Naive thymus-derived CD4-positive, alpha-beta T cell (primary cell): ENCODE measurements at regions of chr2 and their contacts with region 1.

Region 1: GRCh38 chr2:61144697-61145268 is 17.2 kb upstream of the C2orf74 start:
- DNase-seq: peak; percentile 74 to 90 (median 86)
- ATAC-seq: peak; percentile 92
- H3K4me3 ChIP-seq: peak overlapping the region; percentile 82
- H3K4me3 Mint-ChIP-seq: peak overlapping the region; percentile 88 to 98 (median 94)
- H3K27ac ChIP-seq: peak overlapping the region; percentile 73
- H3K27ac Mint-ChIP-seq: peak overlapping the region; percentile 90 to 98 (median 95)
- H3K4me1 ChIP-seq: peaks cover 4 to 5% of the 10 kb centered on the region in 2 donors
- H3K4me1 Mint-ChIP-seq: peaks cover 0 to 18% (median 7%) of the 10 kb centered on the region in 7 donors
- H3K27me3 ChIP-seq: no peaks in the 10 kb centered on the region
- H3K27me3 Mint-ChIP-seq: peaks cover 0 to 2% (median 0%) of the 10 kb centered on the region in 5 donors

Region 2: DNA sequence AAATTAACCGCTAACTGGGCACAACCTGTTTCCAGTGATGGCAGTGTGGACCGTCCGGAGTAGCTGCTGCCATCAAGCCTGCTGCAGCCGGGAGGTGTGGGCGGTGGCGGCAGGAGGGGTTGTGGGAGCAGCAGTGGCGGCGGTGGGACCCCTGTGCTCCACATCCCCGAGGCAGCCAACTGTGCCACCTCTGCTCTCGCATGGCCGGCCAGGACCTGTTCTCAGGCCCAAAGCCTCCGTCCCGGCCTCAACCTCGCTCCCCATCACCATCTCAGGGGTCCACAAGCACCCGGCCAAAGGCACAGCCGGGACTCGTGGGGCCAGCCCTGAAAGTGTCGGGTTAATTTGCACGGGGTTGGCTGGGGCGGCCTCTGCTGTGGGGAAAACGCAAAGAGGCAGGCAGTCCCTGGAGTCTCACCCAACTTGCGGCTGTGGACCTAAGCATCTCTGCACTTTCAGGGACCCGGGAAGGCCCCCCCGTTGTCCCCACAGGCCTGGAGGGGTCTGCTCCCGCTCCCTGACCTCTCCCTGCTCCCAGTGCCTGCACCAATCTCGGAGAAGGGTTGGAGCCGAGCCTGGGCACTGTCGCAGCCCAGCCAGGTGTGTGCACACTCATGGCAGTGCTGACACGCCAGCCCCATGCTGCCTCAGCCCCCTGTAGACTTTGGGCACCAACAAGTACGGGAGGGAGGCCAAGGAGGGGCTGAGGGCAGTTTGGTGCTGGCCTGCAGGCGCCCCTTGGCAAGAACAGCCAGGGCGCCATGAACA is 171.7 kb before region 1 on chr2:
- CTCF ChIA-PET with region 1: no interaction called
- POLR2A ChIA-PET with region 1: no interaction called
- intact Hi-C with region 1: no loop called
- DNase-seq: no peak
- ATAC-seq: no peak
- H3K4me3 ChIP-seq: no peak overlapping the region
- H3K4me3 Mint-ChIP-seq: no peak overlapping the region
- H3K27ac ChIP-seq: no peak overlapping the region
- H3K27ac Mint-ChIP-seq: no peak overlapping the region
- H3K4me1 ChIP-seq: peaks cover 0 to 7% of the 10 kb centered on the region in 2 donors
- H3K4me1 Mint-ChIP-seq: peaks cover 4 to 22% (median 12%) of the 10 kb centered on the region in 7 donors
- H3K27me3 ChIP-seq: no peaks in the 10 kb centered on the region
- H3K27me3 Mint-ChIP-seq: no peaks in the 10 kb centered on the region

Region 3: GRCh38 chr2:61016808-61017555 is 127.8 kb before region 1 on chr2:
- CTCF ChIA-PET with region 1: no interaction called
- POLR2A ChIA-PET with region 1: interaction called, 7 read pairs
- intact Hi-C with region 1: loop called (anchors 1 kb)
- DNase-seq: peak; percentile 41 to 75 (median 72)
- ATAC-seq: peak; percentile 79
- H3K4me3 ChIP-seq: peak overlapping the region; percentile 100
- H3K4me3 Mint-ChIP-seq: peak overlapping the region; percentile 93 to 100 (median 97)
- H3K27ac ChIP-seq: peak overlapping the region; percentile 75
- H3K27ac Mint-ChIP-seq: peak overlapping the region; percentile 90 to 99 (median 95)
- H3K4me1 ChIP-seq: peaks cover 14 to 20% of the 10 kb centered on the region in 2 donors
- H3K4me1 Mint-ChIP-seq: peaks cover 23 to 68% (median 48%) of the 10 kb centered on the region in 7 donors
- H3K27me3 ChIP-seq: no peaks in the 10 kb centered on the region
- H3K27me3 Mint-ChIP-seq: no peaks in the 10 kb centered on the region

Region 4: DNA sequence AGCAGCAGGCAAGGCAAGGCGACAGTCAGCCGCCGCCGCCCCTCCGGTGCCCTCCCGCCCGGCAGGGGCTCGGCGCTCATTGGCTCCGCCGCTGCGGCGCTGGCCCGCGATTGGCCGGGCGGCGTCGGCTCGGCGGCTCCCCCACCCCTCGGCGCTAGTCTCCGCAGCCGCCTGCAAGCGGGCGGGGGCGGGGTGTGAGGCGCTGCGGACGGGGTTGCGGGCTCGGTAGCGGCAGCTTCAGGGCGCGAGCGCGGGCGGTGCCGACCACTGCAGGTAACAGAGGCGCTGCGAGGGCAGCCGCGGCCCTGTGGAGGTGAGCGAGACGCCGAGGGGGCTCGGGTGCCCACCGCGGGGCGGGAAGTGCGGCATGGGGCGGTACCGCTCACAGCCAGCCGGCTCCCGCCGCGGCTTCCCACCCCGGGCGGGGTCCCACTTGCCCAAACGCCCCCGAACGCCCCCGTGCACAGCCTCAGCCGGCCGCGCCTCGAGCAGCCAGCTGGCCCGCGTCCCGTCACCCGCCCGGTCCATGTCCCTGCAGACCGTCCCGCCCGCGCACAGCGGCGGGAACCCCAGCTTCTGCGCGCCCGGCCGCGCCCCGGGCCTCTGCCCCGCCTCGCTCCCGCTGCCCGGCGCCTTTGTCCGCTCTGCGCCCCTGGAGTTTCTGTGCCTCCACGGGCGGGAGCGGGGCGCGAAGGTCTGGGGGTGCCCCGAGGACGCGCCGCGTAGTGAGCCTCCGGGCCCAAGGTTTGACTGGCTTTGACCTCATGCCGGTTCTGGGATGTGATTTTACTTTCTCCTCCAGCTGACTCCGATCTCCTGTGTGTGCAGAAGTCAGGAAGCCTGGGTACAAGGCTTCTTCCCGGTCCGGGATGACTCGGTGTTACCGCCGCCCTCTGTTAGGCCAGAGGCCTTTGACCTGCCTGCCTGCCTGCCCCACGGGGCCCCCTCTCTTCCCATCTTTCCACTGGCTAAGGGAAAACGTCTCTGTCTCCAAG is 78.8 kb before region 1 on chr2 and contains the start of gene SANBR:
- CTCF ChIA-PET with region 1: no interaction called
- POLR2A ChIA-PET with region 1: interaction called, 4 read pairs
- intact Hi-C with region 1: loop called (anchors 1 to 2 kb)
- DNase-seq: peak; percentile 78 to 90 (median 83)
- ATAC-seq: peak; percentile 99
- H3K4me3 ChIP-seq: peak within 1 kb of the TSS; percentile 59
- H3K4me3 Mint-ChIP-seq: peak within 1 kb of the TSS; percentile 79 to 98 (median 95)
- H3K27ac ChIP-seq: peak within 1 kb of the TSS; percentile 49
- H3K27ac Mint-ChIP-seq: peak within 1 kb of the TSS; percentile 12 to 94 (median 79)
- H3K4me1 ChIP-seq: peaks cover 0 to 6% of the 10 kb centered on the region in 2 donors
- H3K4me1 Mint-ChIP-seq: peaks cover 0 to 17% (median 5%) of the 10 kb centered on the region in 7 donors
- H3K27me3 ChIP-seq: no peaks in the 10 kb centered on the region
- H3K27me3 Mint-ChIP-seq: peaks cover 0 to 2% (median 0%) of the 10 kb centered on the region in 5 donors
- total RNA-seq, gene SANBR: 2.0 to 5.9 (median 3.6) TPM

Region 5: GRCh38 chr2:61125123-61125710 is 19.6 kb before region 1 on chr2:
- CTCF ChIA-PET with region 1: no interaction called
- POLR2A ChIA-PET with region 1: no interaction called
- intact Hi-C with region 1: no loop called
- DNase-seq: no peak
- ATAC-seq: no peak
- H3K4me3 ChIP-seq: no peak overlapping the region
- H3K4me3 Mint-ChIP-seq: no peak overlapping the region
- H3K27ac ChIP-seq: no peak overlapping the region
- H3K27ac Mint-ChIP-seq: no peak overlapping the region
- H3K4me1 ChIP-seq: no peaks in the 10 kb centered on the region
- H3K4me1 Mint-ChIP-seq: no peaks in the 10 kb centered on the region
- H3K27me3 ChIP-seq: no peaks in the 10 kb centered on the region
- H3K27me3 Mint-ChIP-seq: no peaks in the 10 kb centered on the region

Region 6: GRCh38 chr2:61854474-61855182 is 709.8 kb after region 1 on chr2:
- CTCF ChIA-PET with region 1: no interaction called
- POLR2A ChIA-PET with region 1: no interaction called
- intact Hi-C with region 1: loop called in 1 of 2 experiments (anchors 1 kb)
- DNase-seq: peak; percentile 61 to 96 (median 94)
- ATAC-seq: peak; percentile 95
- H3K4me3 ChIP-seq: peak overlapping the region; percentile 100
- H3K4me3 Mint-ChIP-seq: peak overlapping the region; percentile 92 to 99 (median 96)
- H3K27ac ChIP-seq: peak overlapping the region; percentile 77
- H3K27ac Mint-ChIP-seq: peak overlapping the region; percentile 90 to 98 (median 95)
- H3K4me1 ChIP-seq: peaks cover 4 to 6% of the 10 kb centered on the region in 2 donors
- H3K4me1 Mint-ChIP-seq: peaks cover 10 to 27% (median 17%) of the 10 kb centered on the region in 7 donors
- H3K27me3 ChIP-seq: no peaks in the 10 kb centered on the region
- H3K27me3 Mint-ChIP-seq: no peaks in the 10 kb centered on the region